Heart right ventricle (tissue), 16 donors: ENCODE measurements at regions of chr10 and their contacts with region 1.

Region 1: DNA sequence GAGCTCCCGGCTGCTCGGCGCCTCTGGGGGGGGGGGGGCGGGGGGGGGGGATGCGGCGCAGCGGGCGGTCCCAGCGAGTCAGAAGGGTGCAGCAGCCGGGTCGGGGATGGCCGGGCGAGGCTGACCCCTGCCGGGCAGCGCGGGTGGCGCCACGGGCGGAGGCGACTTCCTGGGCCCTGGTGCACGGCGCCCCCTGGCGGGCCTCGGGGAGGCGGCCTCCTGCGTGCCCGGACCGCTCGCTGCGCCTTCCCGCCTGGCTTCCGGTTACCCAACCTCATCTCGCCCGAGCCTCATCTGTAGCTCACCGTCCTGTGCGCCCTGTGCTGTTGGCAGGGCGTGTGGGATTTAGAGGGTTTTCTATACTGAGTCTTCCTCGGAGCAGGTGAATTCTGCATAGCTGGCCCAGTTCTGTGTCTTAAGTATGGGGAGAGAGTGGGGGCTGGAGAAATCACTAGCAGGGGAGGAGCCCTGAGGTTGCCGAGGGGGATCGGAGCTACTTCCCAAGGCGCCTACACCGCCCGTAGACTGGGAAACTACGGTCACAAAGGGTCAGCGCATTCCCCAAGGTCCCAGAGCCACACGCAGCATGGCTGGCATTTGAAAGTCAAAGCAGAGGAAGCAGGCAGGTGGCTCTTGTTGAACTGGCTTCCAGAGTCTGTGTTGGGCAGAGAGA is 28.3 kb upstream of the WDFY4 start:
- DNase-seq: peak; percentile 88 to 95
- ATAC-seq: peak; percentile 87 to 95 (median 90)
- H3K4me3 ChIP-seq: peak overlapping the region; percentile 51 to 76 (median 62)
- H3K27ac ChIP-seq: peak overlapping the region in 5 of 10 donors; percentile 26 to 88 (median 71)
- H3K4me1 ChIP-seq: peaks cover 3 to 24% (median 13%) of the 10 kb centered on the region in 9 donors
- H3K27me3 ChIP-seq: peaks cover 0 to 7% (median 0%) of the 10 kb centered on the region in 7 donors
- CTCF ChIP-seq: peak in 8 of 9 donors; percentile 89 to 99 (median 98)

Region 2: DNA sequence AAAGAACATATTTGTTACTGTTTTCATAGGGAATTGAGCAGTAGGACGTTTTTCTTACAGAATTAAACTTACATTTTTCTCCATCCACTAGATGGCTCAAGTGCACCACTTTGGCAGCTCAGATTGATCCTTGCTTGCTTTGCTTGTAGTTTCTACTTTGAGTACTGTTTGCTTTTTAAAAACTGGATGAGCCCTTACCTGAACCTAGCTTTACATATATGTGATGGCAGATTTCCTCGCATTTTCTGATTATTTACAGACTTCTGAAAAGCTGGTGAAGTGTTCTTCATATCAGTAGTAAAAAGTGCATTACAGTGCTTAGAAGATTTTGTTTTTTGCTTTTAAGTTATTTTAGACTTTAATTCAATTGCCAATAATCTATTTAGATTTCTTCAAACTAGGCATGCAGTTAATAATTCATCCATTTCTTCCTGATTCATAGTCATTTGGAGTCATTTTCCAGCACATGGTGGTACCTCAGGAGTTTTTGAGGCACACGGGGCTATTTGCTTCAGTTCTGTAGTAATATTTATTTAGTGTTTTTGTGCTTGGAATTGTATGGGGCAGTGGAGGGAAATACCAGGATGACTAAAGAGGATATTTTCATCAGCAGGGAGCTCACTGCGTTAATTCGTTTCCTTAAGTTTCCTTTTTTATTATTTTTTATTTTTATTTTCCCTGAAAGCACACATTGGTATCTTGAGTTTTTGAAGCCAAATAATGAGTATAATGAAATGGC is 292.6 kb before region 1 on chr10:
- intact Hi-C with region 1: loop called in 9 of 10 experiments (anchors 1 to 5 kb)
- DNase-seq: peak in 1 of 2 donors; percentile 52
- ATAC-seq: peak in 7 of 8 donors; percentile 51 to 88 (median 73)
- H3K4me3 ChIP-seq: no peak overlapping the region
- H3K27ac ChIP-seq: peak overlapping the region in 6 of 10 donors; percentile 3 to 71 (median 42)
- H3K4me1 ChIP-seq: peaks cover 0 to 60% (median 43%) of the 10 kb centered on the region in 9 donors
- H3K27me3 ChIP-seq: no peaks in the 10 kb centered on the region
- CTCF ChIP-seq: peak; percentile 50 to 85 (median 74)

Region 3: DNA sequence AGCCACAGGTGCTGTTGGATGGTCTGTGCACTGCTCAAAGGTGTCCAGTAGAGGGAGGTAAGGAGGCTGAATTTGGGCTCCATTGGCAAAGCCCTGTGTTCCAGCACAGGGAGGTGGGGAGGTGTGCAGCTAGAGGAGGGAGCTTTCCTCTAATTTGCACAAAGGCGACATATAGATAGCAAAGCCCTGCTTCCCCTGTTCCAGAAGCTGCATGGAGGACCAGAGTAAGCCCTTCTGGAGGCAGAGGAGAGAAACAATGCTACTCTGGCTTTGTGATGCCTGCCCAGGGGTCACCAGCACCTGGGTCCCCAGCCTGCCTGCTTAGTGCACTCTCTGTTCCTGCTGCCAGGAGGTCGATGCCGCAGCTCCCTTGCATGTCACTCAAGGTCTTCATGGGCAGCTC is 48.1 kb before region 1 on chr10:
- intact Hi-C with region 1: loop called in 5 of 10 experiments (anchors 2 to 5 kb)
- DNase-seq: no peak
- ATAC-seq: peak in 4 of 8 donors; percentile 24 to 63 (median 41)
- H3K4me3 ChIP-seq: no peak overlapping the region
- H3K27ac ChIP-seq: peak overlapping the region in 1 of 10 donors; percentile 83
- H3K4me1 ChIP-seq: peaks cover 0 to 70% (median 15%) of the 10 kb centered on the region in 9 donors
- H3K27me3 ChIP-seq: peaks cover 0 to 14% (median 9%) of the 10 kb centered on the region in 7 donors
- CTCF ChIP-seq: peak; percentile 57 to 73 (median 65)

Region 4: GRCh38 chr10:48976196-48976595 is 319.8 kb after region 1 on chr10:
- intact Hi-C with region 1: loop called in 9 of 10 experiments (anchors 2 to 10 kb)
- DNase-seq: no peak
- ATAC-seq: peak; percentile 20 to 81 (median 63)
- H3K4me3 ChIP-seq: no peak overlapping the region
- H3K27ac ChIP-seq: no peak overlapping the region
- H3K4me1 ChIP-seq: peaks cover 0 to 2% (median 0%) of the 10 kb centered on the region in 9 donors
- H3K27me3 ChIP-seq: no peaks in the 10 kb centered on the region
- CTCF ChIP-seq: peak in 8 of 9 donors; percentile 15 to 53 (median 46)

Region 5: DNA sequence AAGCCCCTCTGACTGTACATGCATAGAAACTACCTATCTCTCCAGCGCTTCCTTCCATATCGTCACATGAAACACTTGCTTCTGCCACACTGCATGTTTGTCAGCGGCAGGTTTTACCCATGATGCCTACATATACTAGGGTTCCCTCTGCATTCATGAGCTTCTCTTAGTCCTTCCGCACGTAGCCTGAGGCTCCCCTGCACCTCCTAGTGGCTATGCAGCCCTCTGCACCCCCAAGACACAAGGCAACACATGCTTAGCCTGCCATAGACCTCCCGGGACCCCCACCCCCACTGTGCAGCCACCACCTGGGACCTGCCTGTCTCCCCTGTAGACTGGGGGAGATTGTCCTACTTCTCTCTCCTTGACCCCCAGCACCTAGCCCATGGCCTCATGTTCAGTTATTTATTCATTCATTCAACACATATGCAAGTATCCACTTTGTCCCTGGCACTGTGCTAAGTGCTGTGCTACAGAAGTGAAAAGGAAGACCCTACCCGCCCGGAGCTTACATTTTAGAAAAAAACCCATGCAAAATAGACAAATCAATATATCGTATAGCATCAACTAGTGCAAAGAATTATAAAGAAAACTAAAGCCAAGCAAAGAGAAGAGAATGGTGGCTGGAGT is 508.3 kb after region 1 on chr10:
- intact Hi-C with region 1: loop called in 9 of 10 experiments (anchors 2 to 10 kb)
- DNase-seq: peak in 1 of 2 donors; percentile 34
- ATAC-seq: peak in 6 of 8 donors; percentile 27 to 73 (median 62)
- H3K4me3 ChIP-seq: no peak overlapping the region
- H3K27ac ChIP-seq: no peak overlapping the region
- H3K4me1 ChIP-seq: peaks cover 0 to 40% (median 13%) of the 10 kb centered on the region in 9 donors
- H3K27me3 ChIP-seq: no peaks in the 10 kb centered on the region
- CTCF ChIP-seq: peak; percentile 33 to 76 (median 66)

Region 6: GRCh38 chr10:49379596-49380410 is 723.4 kb after region 1 on chr10:
- intact Hi-C with region 1: loop called in 1 of 10 experiments (anchors 10 kb)
- DNase-seq: no peak
- ATAC-seq: peak in 3 of 8 donors; percentile 45 to 58 (median 50)
- H3K4me3 ChIP-seq: no peak overlapping the region
- H3K27ac ChIP-seq: no peak overlapping the region
- H3K4me1 ChIP-seq: no peaks in the 10 kb centered on the region
- H3K27me3 ChIP-seq: peaks cover 0 to 16% (median 6%) of the 10 kb centered on the region in 7 donors
- CTCF ChIP-seq: peak in 4 of 9 donors; percentile 14 to 30 (median 26)

Region 7: DNA sequence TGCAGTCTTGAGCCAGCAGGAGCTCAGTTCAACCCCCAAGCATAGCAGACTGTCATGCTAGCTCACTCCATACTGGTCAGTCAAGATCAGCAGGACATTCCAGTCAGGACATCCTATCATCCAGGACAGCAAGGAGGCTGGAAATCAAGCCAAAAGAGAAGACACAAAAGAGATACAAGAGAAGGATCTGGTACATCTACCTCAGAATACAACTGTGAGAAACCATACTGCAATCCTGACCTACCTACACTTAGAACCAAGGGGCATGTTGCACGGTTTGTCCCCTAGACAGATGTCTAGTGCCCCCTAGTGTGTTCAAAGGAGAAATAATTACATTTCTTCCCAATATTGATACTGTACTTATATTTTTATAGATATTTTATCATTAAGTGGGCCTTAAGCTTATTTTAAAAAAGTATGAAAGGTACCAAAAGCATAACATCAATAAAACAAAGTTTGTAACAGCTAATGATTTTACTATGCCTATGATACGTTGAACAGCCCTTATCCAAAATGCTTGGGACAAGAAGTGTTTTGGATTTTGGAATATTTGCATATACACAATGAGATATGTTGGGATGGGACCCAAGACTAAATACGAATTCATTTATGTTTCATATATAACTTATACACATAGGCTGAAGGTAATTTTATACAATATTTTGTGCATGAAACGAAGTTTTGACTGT is 855.9 kb after region 1 on chr10:
- intact Hi-C with region 1: loop called in 8 of 10 experiments (anchors 5 to 10 kb)
- DNase-seq: no peak
- ATAC-seq: peak in 1 of 8 donors; percentile 44
- H3K4me3 ChIP-seq: no peak overlapping the region
- H3K27ac ChIP-seq: no peak overlapping the region
- H3K4me1 ChIP-seq: peaks cover 0 to 18% (median 7%) of the 10 kb centered on the region in 9 donors
- H3K27me3 ChIP-seq: no peaks in the 10 kb centered on the region
- CTCF ChIP-seq: peak; percentile 10 to 74 (median 64)